Activated CD8-positive, alpha-beta memory T cell treated with anti-CD3 and anti-CD28 coated beads, Interleukin-2, amount 10 ng/mL, durations not matched to agents 7 days and 5 days (primary cell): ENCODE measurements at regions of chr19 and their contacts with region 1.

Region 1: GRCh38 chr19:55160128-55160985 is 2.8 kb upstream of the TNNI3 start:
- DNase-seq: peak; percentile 95
- ATAC-seq: peak; percentile 96
- H3K4me3 Mint-ChIP-seq: no peak overlapping the region
- H3K27ac Mint-ChIP-seq: no peak overlapping the region
- H3K4me1 Mint-ChIP-seq: peaks cover 5% of the 10 kb centered on the region
- H3K27me3 Mint-ChIP-seq: peaks cover 34% of the 10 kb centered on the region

Region 2: GRCh38 chr19:54882758-54883157 is 277.6 kb before region 1 on chr19:
- CTCF ChIA-PET with region 1: interaction called, 12 read pairs
- DNase-seq: no peak
- ATAC-seq: peak; percentile 82
- H3K4me3 Mint-ChIP-seq: peak overlapping the region; percentile 54
- H3K27ac Mint-ChIP-seq: peak overlapping the region; percentile 88
- H3K4me1 Mint-ChIP-seq: peaks cover 12% of the 10 kb centered on the region
- H3K27me3 Mint-ChIP-seq: peaks cover 14% of the 10 kb centered on the region

Region 3: GRCh38 chr19:55132453-55133129 is 27.8 kb before region 1 on chr19:
- CTCF ChIA-PET with region 1: interaction called, 12 read pairs
- DNase-seq: no peak
- ATAC-seq: peak; percentile 30
- H3K4me3 Mint-ChIP-seq: no peak overlapping the region
- H3K27ac Mint-ChIP-seq: no peak overlapping the region
- H3K4me1 Mint-ChIP-seq: no peaks in the 10 kb centered on the region
- H3K27me3 Mint-ChIP-seq: peaks cover 37% of the 10 kb centered on the region

Region 4: GRCh38 chr19:55146078-55146704 is 14.2 kb before region 1 on chr19:
- CTCF ChIA-PET with region 1: interaction called, 29 read pairs
- DNase-seq: peak; percentile 56
- ATAC-seq: peak; percentile 51
- H3K4me3 Mint-ChIP-seq: no peak overlapping the region
- H3K27ac Mint-ChIP-seq: no peak overlapping the region
- H3K4me1 Mint-ChIP-seq: peaks cover 6% of the 10 kb centered on the region
- H3K27me3 Mint-ChIP-seq: peaks cover 56% of the 10 kb centered on the region

Region 5: DNA sequence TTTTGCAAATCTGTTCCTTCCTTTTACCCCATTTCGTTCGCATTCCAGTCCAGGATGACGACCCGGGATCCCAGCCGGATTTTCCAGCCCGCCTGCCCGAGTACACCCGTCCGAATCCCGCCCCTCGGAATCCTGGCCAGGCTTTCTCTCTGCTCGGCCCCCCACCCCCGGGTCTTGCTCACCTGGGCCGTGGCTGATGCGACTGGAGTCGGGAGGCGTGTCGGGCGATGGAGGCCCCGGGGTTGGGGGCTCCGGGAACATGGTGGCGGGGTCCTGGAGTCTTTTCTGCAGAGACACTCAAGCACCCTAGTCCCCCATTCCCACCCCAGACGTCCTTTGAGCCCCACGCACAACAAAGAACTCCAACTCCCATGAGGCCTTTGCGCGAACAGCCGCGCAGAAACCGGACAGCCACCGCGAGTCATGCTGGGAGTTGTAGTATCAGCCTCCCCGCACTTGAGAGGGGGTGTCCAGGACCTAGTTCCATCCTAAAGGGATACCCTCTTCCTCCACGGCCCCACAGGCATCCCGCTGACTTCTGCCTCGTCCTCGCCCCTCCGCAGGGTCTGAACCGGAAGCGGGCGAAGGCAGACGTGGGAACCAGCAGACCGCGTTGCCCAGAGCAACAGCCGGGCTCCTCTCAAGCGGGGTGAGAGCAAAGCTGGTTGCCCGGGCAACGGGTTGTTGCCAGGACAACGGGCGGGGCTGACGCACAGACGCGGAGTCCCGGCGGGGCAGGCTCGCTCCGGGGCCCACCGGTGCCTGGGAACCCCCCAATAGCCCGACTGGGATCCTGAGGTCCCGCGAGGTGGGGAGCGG is 18.6 kb after region 1 on chr19:
- CTCF ChIA-PET with region 1: interaction called, 17 read pairs
- DNase-seq: peak; percentile 96
- ATAC-seq: peak; percentile 88
- H3K4me3 Mint-ChIP-seq: peak overlapping the region; percentile 59
- H3K27ac Mint-ChIP-seq: no peak overlapping the region
- H3K4me1 Mint-ChIP-seq: peaks cover 26% of the 10 kb centered on the region
- H3K27me3 Mint-ChIP-seq: peaks cover 58% of the 10 kb centered on the region